HEK293T (cell line): ENCODE measurements at regions of chr2 and their contacts with region 1.

Region 1: GRCh38 chr2:133814890-133815289 is 246.6 kb upstream of the NCKAP5 start:
- DNase-seq: no peak

Region 2: GRCh38 chr2:133642791-133643191 is 172.1 kb before region 1 on chr2:
- CTCF ChIA-PET with region 1: interaction called, 11 read pairs
- POLR2A ChIA-PET with region 1: no interaction called
- DNase-seq: no peak

Region 3: DNA sequence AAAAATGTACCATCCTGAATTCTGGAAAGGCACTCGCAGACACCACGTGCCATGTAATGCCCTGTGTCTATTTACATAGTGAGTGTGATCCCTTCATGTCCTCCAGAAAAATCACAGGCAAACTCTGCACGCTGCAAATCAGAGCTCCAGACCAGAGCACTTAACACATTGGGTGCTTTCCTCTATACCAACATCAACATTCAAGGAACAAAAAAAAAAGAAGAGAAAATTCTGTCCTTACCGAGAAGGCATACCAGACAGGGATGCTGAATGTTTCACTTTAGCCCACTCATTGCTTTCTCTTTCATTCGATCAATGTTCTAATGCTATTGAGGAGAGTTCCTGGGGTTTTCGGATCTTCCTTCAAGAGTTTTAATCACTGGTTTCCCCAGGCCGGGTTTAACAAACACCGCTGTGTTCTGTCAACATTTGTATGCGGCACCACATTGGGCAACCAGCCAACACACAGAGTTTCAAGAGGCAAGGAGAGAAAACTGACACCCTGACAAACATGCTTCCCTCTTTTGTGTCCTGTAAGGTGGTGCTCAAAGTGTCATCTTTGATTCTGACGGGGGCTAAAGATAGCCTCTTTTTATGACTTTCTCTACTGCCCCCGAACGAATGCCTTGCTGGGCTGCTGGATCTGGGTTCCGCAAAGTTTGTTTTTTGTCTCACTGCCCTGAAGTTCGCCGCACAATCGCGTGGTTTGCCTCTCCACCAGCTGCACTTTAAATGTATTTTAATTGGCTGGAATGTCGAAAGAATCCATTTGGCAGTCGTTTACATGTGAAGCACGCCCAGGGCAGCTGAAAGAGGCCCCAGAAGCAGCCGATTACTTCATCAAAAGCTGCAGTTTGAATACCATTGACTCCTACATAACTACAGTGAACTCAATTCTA is 140.2 kb before region 1 on chr2:
- CTCF ChIA-PET with region 1: no interaction called
- POLR2A ChIA-PET with region 1: no interaction called
- DNase-seq: peak; percentile 22